ENCODE measurements at regions of chr6 and their contacts with region 1.

Region 1: DNA sequence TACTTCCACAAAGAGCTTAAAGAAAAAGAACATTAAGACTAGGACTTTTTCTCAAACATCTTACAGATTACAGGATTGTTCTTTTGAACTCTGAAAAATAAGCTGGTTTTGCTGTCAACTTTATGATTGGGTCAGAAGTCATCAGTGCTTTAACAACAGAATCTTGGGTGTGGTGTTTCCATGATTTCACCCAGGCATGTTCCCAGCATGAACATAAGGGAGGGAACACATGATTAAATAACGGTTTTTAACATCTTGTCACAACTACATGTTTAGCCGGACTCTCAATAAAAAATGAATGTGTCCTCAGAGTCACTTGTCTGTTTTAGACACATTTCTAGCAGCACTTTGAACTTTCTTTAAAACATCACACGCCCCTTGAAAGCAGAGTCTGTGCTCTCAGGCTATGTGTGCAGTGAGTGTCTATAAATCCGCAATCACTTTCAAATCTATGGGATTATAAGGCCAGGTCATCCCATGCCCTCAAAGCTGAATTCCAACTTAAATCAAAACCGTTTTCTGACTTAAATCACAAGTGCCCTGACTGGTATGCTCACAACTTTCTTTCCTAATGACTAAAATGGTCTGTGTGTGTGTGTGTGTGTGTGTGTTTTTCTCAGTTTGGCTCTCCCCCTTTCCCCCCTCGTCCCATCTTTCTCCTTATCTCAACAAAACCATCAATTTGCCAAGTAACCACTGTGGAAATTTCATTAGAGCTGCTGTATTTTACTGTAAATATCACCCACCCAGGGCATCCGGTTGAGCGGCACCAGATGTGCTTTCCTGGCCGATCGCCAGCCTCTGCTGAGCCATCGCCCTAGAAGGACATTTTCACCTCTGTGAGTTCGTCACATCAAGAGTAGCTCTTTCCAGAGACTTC is 216.8 kb upstream of the DTNBP1 start:
- H3K4me3 Mint-ChIP-seq: no peak overlapping the region
- H3K27ac Mint-ChIP-seq: peak overlapping the region; percentile 91
- H3K4me1 Mint-ChIP-seq: peaks cover 66% of the 10 kb centered on the region
- H3K27me3 Mint-ChIP-seq: no peaks in the 10 kb centered on the region

Region 2: DNA sequence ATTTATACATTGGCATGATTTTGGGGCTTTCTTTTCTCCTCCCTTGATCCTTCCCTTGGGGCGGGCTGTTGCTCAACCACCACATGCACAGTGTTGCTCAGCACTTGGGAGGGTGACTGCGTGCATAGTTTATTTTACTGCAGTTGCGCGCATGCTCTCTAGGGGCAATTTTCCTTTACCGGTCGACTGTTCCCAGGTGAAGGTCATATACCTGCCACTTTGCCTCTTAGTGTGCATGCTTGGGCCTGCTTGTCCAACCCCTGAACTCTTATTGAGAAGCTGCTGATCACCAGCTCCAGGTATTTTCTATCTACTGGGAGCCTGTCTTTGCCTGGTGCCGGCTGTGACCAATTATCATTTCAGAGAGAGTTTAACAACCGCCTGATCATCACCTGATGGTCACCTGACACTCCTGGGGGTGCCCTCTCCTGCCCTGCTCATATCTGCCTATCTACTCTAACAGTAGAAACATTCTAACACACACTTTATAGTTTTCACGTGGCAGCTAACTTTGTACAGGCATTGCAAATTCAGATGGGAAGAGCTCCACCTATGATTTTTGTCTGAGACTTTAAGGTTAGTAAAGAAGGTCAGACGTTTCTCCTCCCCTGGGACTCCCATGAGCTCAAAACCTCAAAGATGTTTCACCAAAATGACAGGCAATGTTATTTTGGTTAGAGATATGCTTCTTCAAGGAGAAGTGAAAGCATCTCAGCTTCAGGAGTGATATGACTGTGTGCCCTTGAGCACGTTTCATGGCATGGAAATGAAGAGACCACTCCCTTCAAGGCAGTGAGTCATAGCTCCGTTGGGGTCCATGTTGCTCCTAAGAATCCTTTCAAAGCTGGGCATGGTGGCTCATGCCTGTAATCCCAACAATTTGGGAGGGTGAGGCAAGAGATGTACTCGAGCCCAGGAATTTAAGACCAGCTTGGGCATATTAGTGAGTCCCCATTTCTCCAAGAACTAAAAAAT is 21.8 kb after region 1 on chr6:
- intact Hi-C with region 1: loop called (anchors 1 kb)
- H3K4me3 Mint-ChIP-seq: peak overlapping the region; percentile 37
- H3K27ac Mint-ChIP-seq: peak overlapping the region; percentile 92
- H3K4me1 Mint-ChIP-seq: peaks cover 69% of the 10 kb centered on the region
- H3K27me3 Mint-ChIP-seq: no peaks in the 10 kb centered on the region

Measured in dendritic cell treated with granulocyte-macrophage colony-stimulating factor and Interleukin-4, amounts not matched to agents 40 ng/mL and 50 ng/mL, for 4 days (primary cell).